ENCODE measurements at regions of chr9 and their contacts with region 1.

Region 1: DNA sequence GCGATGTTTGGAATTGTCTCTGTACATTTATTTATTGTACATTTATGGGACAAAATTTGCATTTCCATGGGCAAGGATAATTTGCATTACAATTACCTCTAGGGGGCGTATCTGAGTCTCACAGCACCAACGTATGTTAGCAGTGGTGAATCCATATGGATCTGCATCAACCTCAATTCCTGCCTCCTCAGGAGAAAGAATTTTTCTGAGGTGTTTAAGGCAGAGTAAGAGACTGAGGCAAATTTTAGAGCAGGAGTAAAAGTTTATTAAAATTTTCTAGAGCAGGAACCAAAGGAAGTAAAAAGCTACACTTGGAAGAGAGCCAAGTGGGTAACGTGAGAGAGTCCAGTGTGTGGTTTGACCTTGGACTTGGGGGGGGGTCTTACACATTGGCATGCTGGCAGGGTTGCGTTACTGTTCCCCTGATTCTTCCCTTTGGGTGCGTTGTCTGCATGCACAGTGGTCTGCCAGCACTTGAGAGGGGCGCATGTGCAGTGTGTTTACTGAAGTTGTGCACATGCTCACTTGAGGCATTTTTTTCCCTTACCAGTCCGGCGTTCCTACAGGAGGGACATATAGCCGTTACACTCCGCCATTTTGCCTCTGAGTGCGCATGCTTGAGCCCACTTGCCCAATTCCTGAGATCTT is 21.0 kb upstream of the RAB14 start:
- DNase-seq: peak; percentile 48
- H3K27ac ChIP-seq: no peak overlapping the region
- CTCF ChIP-seq: peak; percentile 91

Region 2: GRCh38 chr9:121196389-121196788 is 26.3 kb before region 1 on chr9:
- CTCF ChIA-PET with region 1: no interaction called
- POLR2A ChIA-PET with region 1: no interaction called
- DNase-seq: no peak
- H3K27ac ChIP-seq: no peak overlapping the region
- CTCF ChIP-seq: no peak

Region 3: DNA sequence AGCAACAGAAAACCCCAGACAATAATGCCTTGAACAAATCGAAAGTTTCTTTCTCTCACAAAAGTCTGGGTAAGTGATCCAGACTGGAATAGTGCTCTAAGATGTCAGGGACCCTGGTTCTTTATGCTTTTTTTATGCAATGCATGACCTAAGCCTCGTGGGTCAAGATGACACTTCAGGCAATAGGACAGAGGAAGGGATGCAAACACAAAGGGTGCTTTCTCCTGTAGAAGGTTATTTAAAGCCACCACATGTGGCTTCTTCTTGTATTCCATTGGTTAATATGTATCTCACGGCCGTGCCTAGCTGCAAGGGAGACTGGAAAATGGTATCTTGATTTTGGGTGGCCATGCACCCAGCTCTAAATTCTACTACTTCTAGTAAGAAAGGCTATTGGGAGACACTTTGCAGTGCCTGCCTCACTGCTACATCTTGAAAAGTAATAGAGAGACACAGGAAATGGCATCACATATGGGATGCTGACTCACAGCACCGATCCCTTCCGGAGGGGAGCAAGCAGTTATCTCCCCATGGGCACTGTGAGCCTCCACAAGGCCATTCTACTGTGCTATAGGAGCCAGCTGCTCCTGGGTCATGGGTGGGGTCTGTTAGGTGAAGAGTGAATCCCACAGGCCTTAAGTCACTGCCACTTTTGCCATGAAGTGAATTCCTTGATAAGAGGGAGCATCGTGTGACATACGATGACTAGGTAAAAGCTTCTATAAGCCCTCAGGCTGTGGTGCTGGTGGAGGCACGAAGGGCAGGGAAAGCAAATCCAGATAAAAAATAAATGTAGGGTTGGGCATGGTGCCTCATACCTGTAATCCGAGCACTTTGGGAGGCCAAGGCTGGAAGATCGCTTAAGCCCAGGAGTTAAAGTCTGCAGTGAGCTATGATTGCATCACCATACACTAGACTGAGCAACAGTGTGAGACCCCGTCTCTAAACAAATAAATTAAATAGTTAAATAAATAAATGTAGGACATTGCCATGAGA is 11.6 kb after region 1 on chr9:
- CTCF ChIA-PET with region 1: interaction called, 14 read pairs
- POLR2A ChIA-PET with region 1: interaction called, 4 read pairs
- DNase-seq: peak; percentile 87
- H3K27ac ChIP-seq: peak overlapping the region; percentile 83
- CTCF ChIP-seq: no peak

Region 4: GRCh38 chr9:121261107-121261460 is 38.4 kb after region 1 on chr9:
- CTCF ChIA-PET with region 1: no interaction called
- POLR2A ChIA-PET with region 1: no interaction called
- DNase-seq: no peak
- H3K27ac ChIP-seq: no peak overlapping the region; the same call in 1 of the 2 replicates
- CTCF ChIP-seq: no peak